Aorta (tissue), 5 donors: ENCODE measurements at regions of chr1 and their contacts with region 1.

Region 1: GRCh38 chr1:2642560-2643413 is 10.0 kb upstream of the MMEL1 start:
- DNase-seq: peak; percentile 95 to 97
- ATAC-seq: peak; percentile 89
- H3K4me3 ChIP-seq: peak overlapping the region; percentile 27 to 62
- H3K27ac ChIP-seq: no peak overlapping the region
- H3K4me1 ChIP-seq: no peaks in the 10 kb centered on the region
- H3K27me3 ChIP-seq: no peaks in the 10 kb centered on the region

Region 2: DNA sequence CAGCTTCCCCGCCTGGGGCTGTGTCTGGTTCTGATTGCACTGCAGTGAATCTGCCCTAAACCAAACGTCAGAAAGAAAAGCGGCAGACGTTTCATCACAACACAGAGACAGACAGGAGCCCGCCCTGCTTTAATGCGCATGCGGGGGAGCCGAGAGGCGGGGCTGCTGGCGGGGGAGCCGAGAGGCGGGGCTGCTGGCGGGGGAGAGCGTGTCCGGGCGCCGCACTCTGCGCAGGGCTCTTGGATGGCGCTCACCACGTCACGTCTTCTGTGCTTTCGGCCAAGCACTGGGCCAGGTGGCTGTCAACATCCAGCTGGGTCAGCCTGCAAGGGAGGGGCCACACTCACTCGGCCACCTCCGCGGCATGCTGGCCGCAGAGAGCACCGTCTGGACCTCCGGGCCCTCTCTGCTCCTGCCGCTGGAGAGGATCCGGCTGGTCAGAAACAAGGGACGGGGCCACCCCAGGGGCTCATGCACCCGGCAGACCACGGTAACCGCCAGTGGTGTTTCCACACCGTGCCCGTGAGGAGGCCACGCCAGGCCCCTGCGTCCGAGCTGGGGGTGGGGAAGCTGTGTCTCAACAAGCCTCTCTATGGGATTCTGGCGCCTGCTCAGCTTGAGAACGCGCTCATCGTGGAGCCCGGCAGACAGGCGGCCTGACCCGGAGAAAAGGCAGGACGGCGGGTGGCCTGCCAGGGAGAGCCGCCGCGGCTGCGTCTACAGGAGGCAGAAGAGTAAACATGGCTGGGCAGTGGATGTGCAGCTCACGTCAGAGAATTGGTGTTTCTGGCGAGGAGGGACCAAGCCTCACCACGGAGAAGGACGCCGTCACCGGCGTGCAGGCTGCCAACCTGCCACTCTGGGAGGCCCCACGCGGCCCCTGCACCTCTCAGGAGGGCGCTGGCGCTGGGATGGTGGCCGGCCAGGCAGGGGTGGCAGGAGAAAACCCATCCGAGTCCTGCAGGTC is 453.0 kb before region 1 on chr1:
- intact Hi-C with region 1: loop called in 1 of 2 experiments (anchors 10 kb)
- DNase-seq: peak; percentile 94 to 96
- ATAC-seq: peak; percentile 95
- H3K4me3 ChIP-seq: peak overlapping the region; percentile 13 to 47
- H3K27ac ChIP-seq: peak overlapping the region; percentile 47 to 64
- H3K4me1 ChIP-seq: no peaks in the 10 kb centered on the region
- H3K27me3 ChIP-seq: no peaks in the 10 kb centered on the region

Region 3: DNA sequence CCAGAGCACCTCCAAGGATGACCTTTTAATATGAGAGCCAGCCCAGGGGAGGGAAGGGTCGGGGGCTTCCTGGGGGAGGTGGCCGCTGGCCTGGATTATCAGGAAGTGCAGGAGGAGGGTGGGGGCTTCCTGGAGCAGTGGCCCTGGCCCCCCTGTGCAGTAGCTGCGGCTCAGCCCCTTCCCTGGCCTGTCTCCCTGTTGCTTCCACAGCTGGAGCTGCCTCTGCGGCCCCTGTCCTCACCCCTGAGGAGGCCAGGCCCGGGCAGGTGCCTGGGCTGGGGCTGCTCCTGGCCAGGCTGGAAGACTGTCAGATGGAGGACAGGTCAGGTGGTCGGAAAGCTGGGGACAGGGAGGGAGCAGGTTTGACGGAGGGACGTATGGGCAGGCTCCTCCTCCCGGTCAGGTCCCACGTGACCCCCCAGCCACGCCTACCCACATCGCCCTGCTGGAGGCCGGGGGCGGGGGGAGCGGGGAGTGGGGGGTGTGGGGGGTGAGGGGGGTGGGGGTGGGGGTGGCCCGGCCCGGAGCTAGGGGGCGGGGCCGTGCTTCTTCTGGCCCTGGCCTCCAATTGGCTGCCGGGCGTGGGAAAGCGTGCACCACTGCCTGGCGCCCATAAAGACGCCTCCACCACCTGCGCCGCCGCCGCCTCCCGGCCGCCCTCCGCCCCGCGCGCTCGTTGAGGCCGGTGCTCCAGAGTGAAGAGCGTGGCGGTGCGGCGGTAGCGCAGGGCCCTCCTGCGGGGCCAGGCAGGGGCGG is 96.8 kb before region 1 on chr1:
- intact Hi-C with region 1: loop called in 1 of 2 experiments (anchors 10 kb)
- DNase-seq: peak; percentile 93 to 94
- ATAC-seq: peak; percentile 77
- H3K4me3 ChIP-seq: peak overlapping the region in 1 of 2 donors; percentile 43
- H3K27ac ChIP-seq: no peak overlapping the region
- H3K4me1 ChIP-seq: no peaks in the 10 kb centered on the region
- H3K27me3 ChIP-seq: no peaks in the 10 kb centered on the region

Region 4: GRCh38 chr1:2586154-2587070 is 56.4 kb before region 1 on chr1 and contains the start of gene PRXL2B:
- intact Hi-C with region 1: loop called in 1 of 2 experiments (anchors 2 kb)
- DNase-seq: peak; percentile 100
- ATAC-seq: peak; percentile 96
- H3K4me3 ChIP-seq: peak within 1 kb of the TSS; percentile 61 to 70
- H3K27ac ChIP-seq: peak within 1 kb of the TSS; percentile 45 to 53
- H3K4me1 ChIP-seq: no peaks in the 10 kb centered on the region
- H3K27me3 ChIP-seq: no peaks in the 10 kb centered on the region
- total RNA-seq, gene PRXL2B: 7.1 to 15.1 TPM